Activated T-helper 1 cell treated with anti-CD3 and anti-CD28 coated beads, Interleukin-12 subunit alpha, Interleukin-12 subunit beta, Interleukin-2, Interleukin-4 antibody, amounts not matched to agents 30 ng/mL and 10 ng/mL and 1 ng/mL, durations not matched to agents 14 hours and 24 hours and 36 hours (primary cell): ENCODE measurements at regions of chr10 and their contacts with region 1.

Region 1: GRCh38 chr10:14878266-14879054 is at the start of gene SUV39H2:
- DNase-seq: peak; percentile 95
- H3K4me3 Mint-ChIP-seq: peak within 1 kb of the TSS; percentile 96
- H3K27ac Mint-ChIP-seq: peak within 1 kb of the TSS; percentile 94
- H3K4me1 Mint-ChIP-seq: peaks cover 50% of the 10 kb centered on the region
- H3K27me3 Mint-ChIP-seq: no peaks in the 10 kb centered on the region
- total RNA-seq, gene SUV39H2: 43.3 and 51.7 TPM in 2 replicates

Region 2: GRCh38 chr10:14185316-14186045 is 693.0 kb before region 1 on chr10:
- intact Hi-C with region 1: loop called (anchors 10 kb)
- DNase-seq: peak; percentile 52
- H3K4me3 Mint-ChIP-seq: peak overlapping the region; percentile 46
- H3K27ac Mint-ChIP-seq: peak overlapping the region; percentile 92
- H3K4me1 Mint-ChIP-seq: peaks cover 20% of the 10 kb centered on the region
- H3K27me3 Mint-ChIP-seq: peaks cover 48% of the 10 kb centered on the region

Region 3: DNA sequence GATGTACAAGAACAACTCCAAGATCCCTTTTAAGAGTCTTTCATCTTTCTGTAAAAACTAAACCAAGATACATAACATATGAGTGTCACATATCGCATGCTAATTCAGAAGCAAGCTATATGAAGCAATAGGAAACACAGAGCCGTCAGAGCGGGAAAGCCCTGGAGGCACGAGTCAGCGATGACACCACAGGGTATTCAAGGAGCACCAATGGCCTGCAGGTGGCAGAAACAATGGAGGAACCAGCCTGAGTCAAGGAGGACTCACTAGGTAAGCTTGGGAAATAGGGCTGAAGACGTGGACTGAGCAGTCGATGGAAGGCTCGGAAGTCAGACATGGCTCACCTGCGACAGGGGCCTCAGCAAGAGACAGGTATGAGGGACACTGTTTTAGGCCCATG is 318.2 kb before region 1 on chr10:
- intact Hi-C with region 1: loop called (anchors 2 kb)
- DNase-seq: peak; percentile 59
- H3K4me3 Mint-ChIP-seq: peak overlapping the region; percentile 41
- H3K27ac Mint-ChIP-seq: peak overlapping the region; percentile 95
- H3K4me1 Mint-ChIP-seq: peaks cover 97% of the 10 kb centered on the region
- H3K27me3 Mint-ChIP-seq: no peaks in the 10 kb centered on the region

Region 4: GRCh38 chr10:14648005-14648765 is 230.3 kb before region 1 on chr10:
- intact Hi-C with region 1: loop called (anchors 1 kb)
- DNase-seq: peak; percentile 67
- H3K4me3 Mint-ChIP-seq: peak overlapping the region; percentile 73
- H3K27ac Mint-ChIP-seq: peak overlapping the region; percentile 98
- H3K4me1 Mint-ChIP-seq: peaks cover 61% of the 10 kb centered on the region
- H3K27me3 Mint-ChIP-seq: no peaks in the 10 kb centered on the region

Region 5: GRCh38 chr10:14926722-14927416 is 48.4 kb after region 1 on chr10:
- intact Hi-C with region 1: no loop called
- DNase-seq: no peak
- H3K4me3 Mint-ChIP-seq: no peak overlapping the region
- H3K27ac Mint-ChIP-seq: no peak overlapping the region
- H3K4me1 Mint-ChIP-seq: no peaks in the 10 kb centered on the region
- H3K27me3 Mint-ChIP-seq: no peaks in the 10 kb centered on the region

Region 6: DNA sequence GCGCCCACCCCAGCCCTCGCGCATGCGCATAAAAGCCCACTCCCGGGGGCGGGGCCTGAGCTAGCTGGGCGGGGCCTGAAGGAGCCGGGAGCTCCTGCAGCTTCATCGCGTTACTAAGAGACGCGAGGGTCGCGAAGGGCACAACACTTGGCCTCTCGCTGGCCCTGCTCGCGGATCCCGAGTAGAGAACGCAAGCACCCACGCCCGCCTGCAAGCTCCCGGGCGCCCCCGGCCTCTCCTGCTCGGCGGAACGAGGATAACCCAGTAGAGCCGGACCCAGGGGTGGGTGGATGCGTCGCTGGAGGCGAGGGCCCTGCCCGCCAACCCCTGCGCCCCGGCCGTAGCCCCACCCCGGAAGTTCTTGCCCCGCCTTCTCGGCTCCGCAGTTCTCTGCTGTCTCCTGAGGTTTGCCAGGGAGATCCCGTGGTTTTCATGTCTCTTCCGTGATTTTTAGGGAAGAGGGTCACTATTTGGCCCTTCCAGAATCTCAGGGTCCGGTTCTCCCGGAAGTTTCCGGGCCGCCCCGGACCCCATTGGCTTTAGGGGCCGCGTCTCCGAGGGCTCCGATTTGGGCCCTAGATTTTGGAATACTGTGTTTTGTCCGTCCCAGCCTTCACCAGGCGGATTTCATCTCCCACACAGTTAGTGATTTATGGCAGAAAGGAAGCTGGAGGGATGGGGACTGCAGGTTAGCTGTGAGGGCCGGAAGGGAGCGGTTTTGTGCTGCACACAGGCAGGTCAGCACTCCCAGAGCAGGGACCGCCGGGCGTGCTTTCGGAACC is 81.0 kb after region 1 on chr10 and contains the start of gene MEIG1:
- intact Hi-C with region 1: loop called (anchors 1 kb)
- DNase-seq: peak; percentile 91
- H3K4me3 Mint-ChIP-seq: peak within 1 kb of the TSS; percentile 97
- H3K27ac Mint-ChIP-seq: peak within 1 kb of the TSS; percentile 95
- H3K4me1 Mint-ChIP-seq: peaks cover 22% of the 10 kb centered on the region
- H3K27me3 Mint-ChIP-seq: no peaks in the 10 kb centered on the region
- total RNA-seq, gene MEIG1: 0.44 TPM in 1 of 2 replicates, not detected in the other

Region 7: DNA sequence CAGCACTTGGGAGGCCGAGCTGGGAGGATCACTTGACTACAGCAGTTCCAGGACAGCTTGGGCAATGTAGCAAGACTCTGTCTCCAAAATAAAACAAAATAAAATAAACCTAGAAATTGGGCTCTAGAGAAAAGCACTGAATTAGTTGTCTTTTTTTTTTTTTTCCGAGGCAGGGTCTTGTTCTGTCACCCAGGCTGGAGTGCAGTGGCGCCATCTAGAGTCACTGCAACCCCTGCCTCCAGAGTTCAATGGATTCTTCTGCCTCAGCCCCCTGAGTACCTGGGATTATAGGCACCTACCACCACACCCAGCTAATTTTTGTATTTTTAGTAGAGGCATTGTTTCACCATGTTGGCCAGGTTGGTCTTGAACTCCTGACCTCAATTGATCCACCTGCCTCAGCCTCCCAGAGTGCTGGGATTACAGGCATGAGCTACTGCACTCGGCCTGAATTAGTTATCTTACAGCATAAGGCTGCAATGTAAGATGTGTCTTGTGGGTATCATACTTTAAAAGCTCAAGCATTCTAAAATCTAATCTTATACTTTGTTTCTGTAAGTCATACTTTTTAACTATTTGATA is 93.5 kb after region 1 on chr10:
- intact Hi-C with region 1: no loop called
- DNase-seq: peak; percentile 36
- H3K4me3 Mint-ChIP-seq: no peak overlapping the region
- H3K27ac Mint-ChIP-seq: no peak overlapping the region
- H3K4me1 Mint-ChIP-seq: no peaks in the 10 kb centered on the region
- H3K27me3 Mint-ChIP-seq: peaks cover 5% of the 10 kb centered on the region

Region 8: DNA sequence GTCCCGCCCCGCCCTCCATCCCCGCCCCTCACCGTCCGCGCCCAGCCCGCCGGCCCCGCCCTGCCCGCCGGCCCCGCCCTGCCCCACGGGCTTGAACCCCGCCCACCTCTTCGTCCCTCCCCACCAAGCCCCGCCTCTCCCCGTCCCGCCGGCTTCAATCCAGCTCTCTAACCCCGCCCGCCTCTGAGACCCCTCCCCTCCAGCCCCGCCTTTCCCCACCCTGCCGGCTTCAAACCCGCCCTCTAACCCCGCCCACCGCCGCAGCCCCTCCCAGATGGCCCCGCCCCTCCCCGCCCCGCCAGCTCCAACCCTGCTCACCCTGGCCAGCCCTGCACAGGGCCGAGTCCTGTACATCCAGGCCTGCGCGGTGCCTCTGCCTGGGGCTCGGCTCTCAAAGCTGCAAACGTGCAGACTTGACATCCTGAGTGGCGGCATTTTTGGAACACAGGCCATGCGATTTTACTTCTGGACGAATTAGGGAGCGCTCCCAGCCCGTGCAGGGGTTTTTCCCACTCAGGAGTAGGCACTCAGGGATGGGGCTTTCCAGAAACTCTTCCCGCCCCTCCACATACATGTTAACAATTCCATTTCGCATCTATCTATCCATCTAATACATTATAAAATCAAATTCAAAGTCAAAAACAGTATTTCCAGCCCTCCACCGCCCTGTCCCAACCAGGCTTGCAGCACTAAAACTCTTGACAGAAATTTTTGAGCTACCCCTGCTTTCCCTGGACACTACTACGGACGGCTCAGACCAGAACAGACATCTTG is 290.5 kb after region 1 on chr10:
- intact Hi-C with region 1: loop called (anchors 1 kb)
- DNase-seq: peak; percentile 84
- H3K4me3 Mint-ChIP-seq: peak overlapping the region; percentile 55
- H3K27ac Mint-ChIP-seq: peak overlapping the region; percentile 74
- H3K4me1 Mint-ChIP-seq: peaks cover 51% of the 10 kb centered on the region
- H3K27me3 Mint-ChIP-seq: peaks cover 5% of the 10 kb centered on the region